GM10248 (cell line): ENCODE measurements at regions of chr3 and their contacts with region 1.

Region 1: DNA sequence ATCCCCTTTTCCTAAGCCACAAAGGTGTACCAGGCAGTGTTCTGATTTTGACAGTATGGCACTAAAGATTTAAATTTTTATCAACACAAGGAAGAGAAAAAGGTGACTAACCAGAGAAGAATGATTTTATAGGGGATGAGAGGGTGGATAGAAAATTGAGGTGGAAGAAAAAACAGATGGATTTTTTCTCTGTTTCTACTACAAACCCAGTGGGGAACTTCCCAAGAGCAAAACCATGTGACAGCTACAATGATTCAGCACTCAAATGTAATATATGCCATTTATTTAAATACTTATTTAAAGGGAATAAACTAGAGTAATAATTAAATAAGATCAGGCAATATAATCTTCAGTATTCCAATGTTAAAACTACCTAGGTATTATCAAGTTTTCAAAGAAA is 11.1 kb downstream of the DCUN1D1 start:
- DNase-seq: no peak
- CTCF ChIP-seq: no peak

Region 2: GRCh38 chr3:182979674-182980191 is 10.5 kb after region 1 on chr3:
- CTCF ChIA-PET with region 1: interaction called, 10 read pairs
- POLR2A ChIA-PET with region 1: no interaction called
- DNase-seq: no peak
- CTCF ChIP-seq: no peak